Psoas muscle (tissue), 8 donors: ENCODE measurements at regions of chr19 and their contacts with region 1.

Region 1: DNA sequence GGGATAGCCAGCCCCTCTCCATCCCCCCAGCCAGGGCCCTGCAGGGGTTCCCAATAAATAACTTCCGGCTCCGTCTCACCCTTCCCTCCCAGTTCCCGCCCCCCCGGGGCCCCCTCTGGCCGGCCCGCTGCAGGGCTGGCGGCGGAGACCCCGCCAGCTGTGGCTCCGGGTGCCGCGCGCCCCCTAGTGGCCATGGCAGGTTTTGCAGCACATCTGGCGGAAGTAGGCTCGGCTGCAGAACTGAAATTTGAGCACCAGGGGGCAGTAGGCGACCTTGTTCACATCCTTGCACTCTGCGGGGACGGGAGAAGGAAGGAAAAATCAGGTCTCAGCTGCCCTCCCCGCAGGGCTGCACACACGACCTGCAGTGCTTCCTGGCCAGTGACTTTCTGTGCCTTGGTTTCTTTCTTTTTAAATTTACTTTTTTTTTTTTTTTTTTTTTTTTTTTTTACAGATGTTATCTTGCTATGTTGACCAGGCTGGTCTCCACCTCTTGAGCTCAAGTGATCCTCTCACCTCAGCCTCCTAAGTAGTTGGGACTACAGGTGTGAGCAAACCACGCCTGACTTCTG is 3.6 kb upstream of the MYO1F start:
- DNase-seq: peak; percentile 69 to 85
- ATAC-seq: peak; percentile 27 to 69 (median 51)
- H3K4me3 ChIP-seq: no peak overlapping the region
- H3K27ac ChIP-seq: no peak overlapping the region
- H3K4me1 ChIP-seq: no peaks in the 10 kb centered on the region
- H3K27me3 ChIP-seq: peaks cover 0 to 6% (median 4%) of the 10 kb centered on the region in 3 donors
- CTCF ChIP-seq: peak; percentile 84

Region 2: GRCh38 chr19:8526345-8527067 is 54.3 kb before region 1 on chr19:
- intact Hi-C with region 1: no loop called
- DNase-seq: peak; percentile 88 to 91
- ATAC-seq: peak; percentile 70 to 82 (median 70)
- H3K4me3 ChIP-seq: peak overlapping the region; percentile 75
- H3K27ac ChIP-seq: peak overlapping the region; percentile 76
- H3K4me1 ChIP-seq: no peaks in the 10 kb centered on the region
- H3K27me3 ChIP-seq: peaks cover 0 to 4% (median 0%) of the 10 kb centered on the region in 3 donors
- CTCF ChIP-seq: no peak

Region 3: GRCh38 chr19:8641908-8642547 is 61.2 kb after region 1 on chr19:
- intact Hi-C with region 1: loop called in 1 of 2 experiments (anchors 5 kb)
- DNase-seq: no peak
- ATAC-seq: no peak
- H3K4me3 ChIP-seq: no peak overlapping the region
- H3K27ac ChIP-seq: no peak overlapping the region
- H3K4me1 ChIP-seq: no peaks in the 10 kb centered on the region
- H3K27me3 ChIP-seq: no peaks in the 10 kb centered on the region
- CTCF ChIP-seq: peak; percentile 44